Colonic mucosa (tissue), 4 donors: ENCODE measurements at regions of chr2 and their contacts with region 1.

Region 1: DNA sequence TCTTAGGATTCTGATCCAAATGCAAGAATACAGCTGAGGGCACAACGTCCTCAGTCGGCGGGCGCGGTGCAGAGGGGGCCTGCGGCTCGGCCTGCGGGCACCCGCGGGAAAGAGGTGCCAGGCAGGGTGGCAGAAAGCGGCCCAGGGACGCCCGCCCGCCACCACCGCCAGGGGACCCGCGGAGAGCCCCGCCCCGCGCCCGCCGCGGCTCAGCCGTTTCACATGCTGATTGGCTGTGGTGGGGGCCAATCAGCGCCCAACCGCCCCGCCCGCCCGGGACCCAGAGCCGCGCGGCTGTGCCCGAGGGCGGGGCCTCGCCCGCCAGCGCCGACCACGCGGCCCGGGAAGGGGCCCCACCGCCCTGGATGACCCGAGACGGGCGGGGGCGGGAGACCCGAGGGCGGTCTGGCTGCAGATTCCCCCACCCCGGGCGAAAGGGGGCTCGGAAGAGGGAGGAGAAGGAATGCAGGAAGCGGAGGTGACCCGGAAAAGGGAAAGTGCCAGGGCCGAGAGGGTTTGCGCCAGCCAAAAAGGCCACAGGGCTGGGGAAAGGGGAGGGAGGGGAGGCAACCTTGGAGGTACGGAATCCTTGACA is 8.0 kb downstream of the IRS1 start:
- DNase-seq: peak; percentile 92
- H3K4me3 ChIP-seq: peak overlapping the region; percentile 51
- H3K27ac ChIP-seq: peak overlapping the region; percentile 83
- H3K4me1 ChIP-seq: no peaks in the 10 kb centered on the region
- H3K27me3 ChIP-seq: no peaks in the 10 kb centered on the region
- CTCF ChIP-seq: peak; percentile 48

Region 2: DNA sequence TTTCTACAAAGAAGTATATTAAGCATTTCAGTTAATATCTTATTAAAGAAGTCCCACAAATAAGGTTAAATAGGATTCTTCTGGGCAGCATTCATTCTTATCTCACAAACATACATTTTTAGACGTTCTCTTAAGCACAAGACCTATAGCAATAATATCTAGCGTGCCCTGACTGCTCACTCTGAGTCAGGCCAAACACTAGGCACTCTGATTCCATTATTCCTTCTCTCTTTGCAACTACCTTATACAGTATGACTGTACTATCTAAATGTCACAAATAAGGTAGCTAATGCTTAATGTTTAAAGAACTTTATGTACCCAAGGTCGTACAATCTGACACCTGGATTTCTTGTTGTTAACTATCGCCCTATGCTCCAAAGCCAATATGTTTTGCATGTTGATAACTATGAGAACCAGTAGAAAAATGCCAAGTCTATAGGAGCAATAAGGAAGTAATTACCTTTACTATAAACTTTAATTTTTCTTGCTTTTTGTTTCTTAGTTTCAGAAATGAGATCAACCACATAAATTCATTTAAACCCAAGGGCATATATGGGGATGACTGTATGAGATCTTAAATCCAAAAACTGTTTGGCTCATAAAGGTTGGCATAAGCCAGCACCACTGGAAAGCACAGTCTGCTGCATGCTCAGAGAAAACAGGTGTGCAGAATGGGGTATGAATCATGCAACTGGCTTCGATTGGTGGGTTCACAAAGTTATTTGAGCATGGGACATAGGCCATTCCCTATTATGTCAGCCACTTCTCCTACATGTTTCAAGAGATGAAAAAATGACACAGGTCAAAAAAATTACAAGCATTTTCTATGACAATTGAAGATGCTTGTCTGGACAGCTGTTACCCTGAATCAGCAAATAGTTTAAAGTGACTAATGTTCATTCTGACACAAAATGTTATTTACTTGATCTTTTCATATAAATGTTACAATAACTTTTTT is 344.0 kb before region 1 on chr2:
- intact Hi-C with region 1: loop called (anchors 10 kb)
- DNase-seq: peak; percentile 28
- H3K4me3 ChIP-seq: no peak overlapping the region
- H3K27ac ChIP-seq: peak overlapping the region; percentile 39
- H3K4me1 ChIP-seq: no peaks in the 10 kb centered on the region
- H3K27me3 ChIP-seq: no peaks in the 10 kb centered on the region
- CTCF ChIP-seq: no peak

Region 3: GRCh38 chr2:226649871-226650660 is 141.5 kb before region 1 on chr2:
- intact Hi-C with region 1: loop called (anchors 10 kb)
- DNase-seq: peak; percentile 86
- H3K4me3 ChIP-seq: no peak overlapping the region
- H3K27ac ChIP-seq: peak overlapping the region; percentile 83
- H3K4me1 ChIP-seq: peaks cover 8% of the 10 kb centered on the region
- H3K27me3 ChIP-seq: no peaks in the 10 kb centered on the region
- CTCF ChIP-seq: no peak

Region 4: DNA sequence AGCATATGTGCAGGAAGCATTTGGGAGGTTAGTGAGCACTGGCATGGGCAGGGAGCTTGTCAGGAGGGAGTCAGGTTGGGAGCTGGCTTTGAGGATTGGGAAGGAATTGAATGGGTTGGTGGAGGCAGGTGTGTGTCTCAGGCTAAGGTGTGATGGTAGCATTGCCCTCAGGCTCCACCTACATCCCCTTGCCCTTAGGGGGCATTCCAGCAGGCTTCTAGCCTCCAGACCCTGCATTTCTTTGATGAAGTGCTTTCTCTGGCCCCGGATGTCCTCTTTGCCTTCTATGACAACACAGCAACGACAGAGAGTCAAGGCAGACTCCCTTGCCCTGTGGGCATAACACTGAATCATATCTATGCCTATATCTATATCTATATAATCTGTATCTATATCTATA is 57.8 kb after region 1 on chr2:
- intact Hi-C with region 1: no loop called
- DNase-seq: no peak
- H3K4me3 ChIP-seq: no peak overlapping the region
- H3K27ac ChIP-seq: no peak overlapping the region
- H3K4me1 ChIP-seq: no peaks in the 10 kb centered on the region
- H3K27me3 ChIP-seq: no peaks in the 10 kb centered on the region
- CTCF ChIP-seq: no peak